Esophagus muscularis mucosa (tissue), 4 donors: ENCODE measurements at regions of chr10 and their contacts with region 1.

Region 1: DNA sequence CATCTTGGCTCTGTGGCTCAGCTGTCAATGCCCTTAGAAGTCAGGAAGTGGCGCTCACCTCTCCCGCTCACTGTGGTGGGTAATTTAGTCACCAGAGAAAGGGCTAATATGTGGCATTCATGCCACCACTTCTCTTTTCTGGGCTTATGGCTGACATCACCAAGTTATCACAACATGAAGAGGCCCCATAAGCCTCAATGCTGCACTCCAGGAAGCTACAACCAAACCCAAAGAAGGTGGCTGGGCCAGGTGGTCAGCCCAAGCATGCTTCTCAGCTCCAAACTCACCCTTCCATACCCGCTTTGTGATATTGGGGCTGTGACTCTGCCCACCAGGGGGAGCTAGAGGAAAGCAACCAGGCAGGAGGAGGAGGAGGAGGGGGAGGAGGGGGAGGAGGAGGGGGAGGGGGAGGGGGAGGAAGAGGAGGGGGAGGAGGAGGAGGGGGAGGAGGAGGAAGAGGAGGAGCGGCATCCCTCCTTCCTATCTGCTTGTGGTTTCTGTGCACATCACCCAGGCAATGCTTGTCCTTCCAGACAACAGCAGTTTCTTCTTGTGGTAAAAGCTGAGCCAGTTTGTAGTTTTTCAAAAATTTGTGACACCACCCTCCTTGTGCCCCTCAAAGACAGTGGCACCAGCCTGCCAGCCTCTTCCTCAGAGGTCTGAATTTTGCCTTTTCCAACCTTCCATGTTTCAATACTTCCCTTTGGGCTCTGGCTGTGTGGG is 42.1 kb downstream of the CYP26A1 start:
- DNase-seq: no peak
- H3K4me3 ChIP-seq: no peak overlapping the region
- H3K27ac ChIP-seq: no peak overlapping the region
- H3K4me1 ChIP-seq: no peaks in the 10 kb centered on the region
- H3K27me3 ChIP-seq: no peaks in the 10 kb centered on the region
- CTCF ChIP-seq: peak; percentile 35 to 52 (median 39)
- EP300 ChIP-seq: no peak
- POLR2A ChIP-seq: no peak

Region 2: DNA sequence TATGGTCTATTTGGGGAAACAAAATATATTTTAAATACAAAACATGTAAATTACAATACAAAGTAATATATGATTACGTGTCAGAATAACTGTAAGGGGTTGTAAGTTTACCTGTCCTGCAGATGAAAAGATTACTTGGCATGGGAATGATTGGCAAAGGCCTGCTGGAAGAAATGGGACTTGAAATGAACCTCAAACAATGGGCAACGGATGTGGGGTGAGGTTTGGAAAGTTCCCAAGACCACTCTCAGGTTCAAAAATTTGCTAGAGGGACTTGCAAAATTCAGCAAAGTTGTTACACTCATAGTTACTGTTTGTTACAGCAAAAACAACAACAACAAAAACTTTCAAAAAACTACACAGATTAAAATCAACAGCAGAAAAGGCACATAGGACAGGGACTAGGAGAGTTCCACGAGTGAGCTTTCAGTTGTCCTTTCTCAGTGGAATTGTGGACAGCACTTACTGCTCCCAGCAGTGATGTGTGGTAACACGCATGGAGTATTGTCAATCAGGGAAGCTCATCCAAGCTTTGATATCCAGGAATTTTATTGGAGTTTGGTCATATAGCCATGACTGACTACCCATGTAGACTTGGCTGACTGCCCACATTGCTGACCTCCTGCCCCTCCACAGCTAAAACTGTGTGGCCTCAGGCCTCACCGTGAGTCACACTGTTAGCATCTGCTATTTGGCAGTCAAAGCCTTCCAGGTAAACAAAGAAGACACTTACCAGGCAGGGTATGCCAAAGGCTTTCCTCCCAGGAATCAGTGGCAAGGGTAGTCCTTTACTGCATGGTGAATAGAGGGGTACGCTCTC is 223.7 kb before region 1 on chr10:
- intact Hi-C with region 1: no loop called
- DNase-seq: no peak
- H3K4me3 ChIP-seq: no peak overlapping the region
- H3K27ac ChIP-seq: peak overlapping the region in 2 of 4 donors; percentile 1 to 22
- H3K4me1 ChIP-seq: peaks cover 9 to 45% (median 36%) of the 10 kb centered on the region in 4 donors
- H3K27me3 ChIP-seq: no peaks in the 10 kb centered on the region
- CTCF ChIP-seq: no peak
- EP300 ChIP-seq: no peak
- POLR2A ChIP-seq: no peak

Region 3: GRCh38 chr10:92923416-92923815 is 192.4 kb before region 1 on chr10:
- intact Hi-C with region 1: no loop called
- DNase-seq: no peak
- H3K4me3 ChIP-seq: no peak overlapping the region
- H3K27ac ChIP-seq: no peak overlapping the region
- H3K4me1 ChIP-seq: no peaks in the 10 kb centered on the region
- H3K27me3 ChIP-seq: no peaks in the 10 kb centered on the region
- CTCF ChIP-seq: no peak
- EP300 ChIP-seq: no peak
- POLR2A ChIP-seq: no peak

Region 4: GRCh38 chr10:93173967-93174845 is 58.4 kb after region 1 on chr10:
- intact Hi-C with region 1: no loop called
- DNase-seq: no peak
- H3K4me3 ChIP-seq: no peak overlapping the region
- H3K27ac ChIP-seq: no peak overlapping the region
- H3K4me1 ChIP-seq: no peaks in the 10 kb centered on the region
- H3K27me3 ChIP-seq: no peaks in the 10 kb centered on the region
- CTCF ChIP-seq: no peak
- EP300 ChIP-seq: no peak
- POLR2A ChIP-seq: no peak

Region 5: GRCh38 chr10:93224005-93224779 is 108.4 kb after region 1 on chr10:
- intact Hi-C with region 1: no loop called
- DNase-seq: peak; percentile 19
- H3K4me3 ChIP-seq: no peak overlapping the region
- H3K27ac ChIP-seq: no peak overlapping the region
- H3K4me1 ChIP-seq: no peaks in the 10 kb centered on the region
- H3K27me3 ChIP-seq: peaks cover 0 to 10% (median 0%) of the 10 kb centered on the region in 4 donors
- CTCF ChIP-seq: no peak
- EP300 ChIP-seq: no peak
- POLR2A ChIP-seq: no peak

Region 6: DNA sequence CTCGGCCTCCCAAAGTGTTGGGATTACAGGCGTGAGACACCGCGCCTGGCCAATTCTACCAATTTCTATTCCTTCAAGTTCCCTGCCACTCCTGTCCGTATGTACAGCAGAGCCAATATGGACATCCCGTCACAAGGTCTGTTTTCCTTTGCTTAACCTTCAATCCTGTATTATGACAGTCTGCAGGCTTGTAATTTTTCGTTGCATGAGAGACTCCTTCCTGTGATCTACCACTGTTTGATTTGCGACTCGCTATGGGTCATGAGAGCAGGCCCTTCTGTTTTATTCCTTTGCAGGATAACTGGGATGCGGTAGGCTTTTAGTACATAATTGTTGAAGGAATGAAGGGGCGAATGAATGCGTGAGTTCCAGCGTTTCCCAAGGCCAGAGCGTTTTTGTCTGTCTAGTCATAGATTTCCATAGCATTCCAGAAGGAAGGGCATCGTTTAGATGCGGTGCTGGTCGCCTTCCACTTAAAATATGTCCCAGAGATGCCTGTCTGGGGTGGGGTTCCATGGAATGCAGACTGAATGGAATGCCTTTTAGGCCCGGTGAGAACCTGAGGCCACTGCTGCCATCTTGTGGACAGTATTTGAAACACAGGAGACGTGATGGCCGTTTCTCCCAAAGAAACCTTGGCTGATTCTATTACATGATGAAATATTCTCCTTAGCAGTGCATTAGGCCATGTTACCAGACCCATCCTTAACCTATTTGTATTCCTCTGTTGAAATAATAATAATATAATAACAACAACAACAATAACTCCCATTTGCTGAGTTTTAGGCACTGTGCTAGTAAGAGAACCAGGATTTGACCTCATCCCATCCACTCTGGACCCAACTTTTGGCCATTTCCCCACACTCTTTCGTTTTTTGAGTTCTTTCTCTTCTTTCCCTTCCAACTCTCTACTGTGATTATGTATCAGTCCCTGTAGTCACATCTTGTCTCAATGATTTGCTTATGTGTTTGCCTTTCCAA is 173.1 kb after region 1 on chr10:
- intact Hi-C with region 1: loop called (anchors 5 kb)
- DNase-seq: no peak
- H3K4me3 ChIP-seq: no peak overlapping the region
- H3K27ac ChIP-seq: no peak overlapping the region
- H3K4me1 ChIP-seq: peaks cover 0 to 6% (median 5%) of the 10 kb centered on the region in 4 donors
- H3K27me3 ChIP-seq: no peaks in the 10 kb centered on the region
- CTCF ChIP-seq: peak; percentile 78 to 86 (median 79)
- EP300 ChIP-seq: no peak
- POLR2A ChIP-seq: no peak